Left cardiac atrium (tissue), 4 donors: ENCODE measurements at regions of chr19 and their contacts with region 1.

Region 1: DNA sequence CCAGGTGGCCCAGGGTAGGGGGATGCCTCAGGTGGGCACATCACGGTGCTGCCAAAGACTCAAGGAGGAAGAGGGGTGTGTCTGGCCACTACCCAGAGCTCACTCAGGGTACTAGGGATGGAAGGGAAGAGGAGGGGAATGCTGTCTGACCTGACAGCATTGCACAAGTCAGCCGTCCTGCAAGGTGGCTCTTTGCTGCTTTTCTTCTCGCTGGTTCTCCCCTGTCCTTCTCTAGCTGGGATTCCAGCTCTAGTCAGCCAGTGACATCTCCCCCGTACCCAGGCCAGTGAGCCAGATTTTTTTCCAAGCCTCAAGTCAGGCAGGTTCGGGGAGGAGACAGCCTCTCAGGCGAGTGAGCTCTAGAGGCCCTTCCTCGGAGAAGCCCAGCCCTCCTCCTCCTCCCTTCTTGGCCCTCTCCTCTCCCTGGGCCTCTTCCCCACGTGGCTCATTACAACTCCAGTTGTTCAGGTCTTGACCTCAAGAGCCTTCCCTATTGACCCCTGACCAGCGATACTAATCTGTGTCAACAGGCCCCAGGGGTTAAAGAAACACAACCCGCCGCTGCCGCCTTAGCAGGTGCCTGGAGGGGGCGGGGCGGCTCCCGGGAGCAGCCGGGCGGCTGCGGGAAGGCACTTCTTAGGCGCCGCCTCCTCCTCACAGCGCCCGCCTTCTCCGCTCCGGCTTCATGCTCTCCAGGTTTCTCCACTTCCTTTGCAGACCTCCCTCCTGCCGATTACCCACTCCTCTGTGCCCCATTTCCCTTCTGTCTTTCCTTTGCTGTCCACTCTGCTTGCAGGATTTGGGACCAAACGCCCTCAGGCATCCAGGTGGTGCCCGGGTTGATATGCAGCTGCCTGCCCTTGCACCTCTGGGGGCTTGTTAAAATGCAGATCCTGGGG is 51.1 kb downstream of the LYL1 start:
- DNase-seq: no peak
- ATAC-seq: peak; percentile 17 to 31

Region 2: DNA sequence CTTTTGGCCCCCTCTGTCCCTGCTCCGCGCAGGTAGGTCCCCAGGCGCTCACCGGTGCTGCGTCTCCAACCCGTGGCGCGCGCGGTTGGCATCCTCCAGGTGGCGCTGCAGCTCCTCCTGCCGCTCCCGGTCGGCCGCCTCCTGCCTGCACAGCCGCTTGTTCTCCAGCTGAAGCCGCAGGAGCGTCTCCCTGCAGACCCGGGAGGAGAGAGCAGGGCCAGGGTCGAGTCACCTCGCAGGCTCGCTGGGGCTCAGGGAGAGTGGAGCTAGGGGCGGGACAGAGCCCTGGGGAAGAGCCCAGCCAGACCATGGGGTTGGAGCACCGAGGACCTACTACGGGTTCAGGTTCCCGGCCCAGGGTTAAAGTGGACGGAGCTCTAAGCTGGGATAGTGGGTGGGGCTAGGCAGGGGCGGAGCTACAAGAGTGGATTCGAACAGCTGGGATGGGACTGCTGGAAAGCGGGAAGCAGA is 285.4 kb before region 1 on chr19:
- intact Hi-C with region 1: no loop called
- DNase-seq: peak; percentile 84
- ATAC-seq: peak; percentile 77 to 94

Region 3: DNA sequence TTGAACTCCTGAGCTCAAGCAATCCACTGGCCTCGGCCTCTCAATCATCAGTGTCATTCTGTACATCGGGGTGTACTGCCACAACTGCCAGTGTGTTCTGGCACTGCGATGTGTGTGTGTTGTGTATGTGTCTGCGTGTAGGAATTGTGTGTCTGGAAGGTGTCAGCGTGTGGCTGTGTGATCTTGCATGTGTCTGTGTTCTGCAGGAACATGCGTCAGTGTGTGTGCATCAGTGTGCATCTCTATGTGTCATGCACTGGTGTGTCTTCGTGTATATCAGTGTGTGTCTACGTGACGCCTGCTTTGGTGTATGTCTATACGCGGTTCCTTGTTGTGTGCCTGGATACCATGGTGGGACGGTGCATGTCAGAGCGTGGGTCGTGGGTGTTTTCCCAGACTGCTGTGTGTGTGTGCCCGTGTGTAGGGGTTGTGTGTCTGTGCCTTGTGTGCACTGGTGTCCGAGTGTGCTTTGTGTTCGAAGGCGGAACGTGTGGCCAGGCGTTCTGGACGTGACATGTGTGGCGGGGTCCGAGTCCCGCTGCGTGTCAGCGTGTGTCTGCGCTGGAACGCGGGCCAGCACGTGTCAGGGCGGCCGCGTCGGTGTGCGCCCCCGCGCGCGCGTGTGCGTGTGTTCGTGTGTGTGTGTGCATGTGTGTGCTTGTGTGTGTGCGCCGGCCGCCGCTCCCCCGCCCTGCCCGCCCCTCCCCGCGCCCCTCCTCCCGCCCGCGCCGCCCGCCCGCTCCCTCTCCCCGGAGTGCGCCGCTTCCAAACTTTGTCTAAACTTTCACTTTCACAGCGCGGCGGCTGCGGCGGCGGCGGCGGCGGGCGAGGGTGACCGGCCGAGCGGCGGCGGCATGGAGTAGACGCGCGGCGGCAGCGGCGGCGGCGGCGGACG is 56.6 kb before region 1 on chr19 and contains the start of gene NFIX:
- intact Hi-C with region 1: loop called in 1 of 2 experiments (anchors 5 kb)
- DNase-seq: peak; percentile 76
- ATAC-seq: peak; percentile 44 to 60
- total RNA-seq, gene NFIX: 117 to 133 TPM

Region 4: GRCh38 chr19:13417054-13417453 is 365.5 kb after region 1 on chr19:
- intact Hi-C with region 1: no loop called
- DNase-seq: peak; percentile 32
- ATAC-seq: no peak